Sciatic nerve (tissue), 2 donors: ENCODE measurements at regions of chr6 and their contacts with region 1.

Region 1: GRCh38 chr6:3052481-3053230 is 15.6 kb upstream of the RIPK1 start:
- DNase-seq: no peak
- ATAC-seq: no peak

Region 2: DNA sequence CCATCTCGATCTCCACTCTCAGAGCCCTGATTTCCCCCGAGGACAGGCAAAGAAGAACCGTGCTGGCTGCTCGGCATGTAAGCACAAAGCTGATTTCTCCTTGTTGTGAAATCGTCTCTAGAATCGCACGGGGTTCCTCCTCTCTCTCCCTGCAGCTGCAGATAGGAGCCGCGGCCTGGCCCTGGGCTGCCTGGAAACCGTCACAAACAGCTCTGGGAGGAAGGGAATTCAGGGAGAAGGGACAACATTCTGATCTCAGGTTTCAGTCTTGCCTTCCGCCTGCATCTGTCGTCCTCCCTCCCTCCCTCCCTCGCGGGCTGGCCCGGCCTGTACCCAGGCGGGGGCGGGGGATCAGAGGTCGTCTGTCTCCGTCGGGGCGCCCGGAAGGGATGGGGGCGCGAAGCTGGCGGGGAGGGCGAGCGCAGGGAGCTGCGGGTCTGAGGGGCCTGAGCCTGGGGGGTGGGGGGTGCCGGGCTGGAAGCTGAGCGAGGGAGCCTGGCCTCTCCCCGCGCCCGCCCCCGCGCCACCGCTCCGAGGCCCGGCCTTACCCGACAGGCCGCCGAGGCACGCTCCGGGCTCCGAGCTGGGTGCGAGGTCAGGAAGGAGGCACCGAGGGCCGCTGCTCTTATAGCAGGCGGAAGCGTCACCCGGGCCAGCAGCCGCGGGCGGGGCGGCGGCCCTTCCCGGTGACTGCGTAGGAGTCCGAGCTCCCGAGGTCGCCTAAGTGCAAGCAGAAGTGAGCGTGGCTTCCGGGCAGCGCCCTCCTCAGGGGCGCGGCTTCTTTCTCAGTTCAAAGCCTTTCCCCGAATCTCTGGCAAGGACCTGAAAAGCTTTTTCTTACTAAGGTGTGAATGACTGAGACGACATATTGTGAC is 211.2 kb before region 1 on chr6 and contains the start of gene SERPINB1:
- intact Hi-C with region 1: loop called (anchors 10 kb)
- DNase-seq: peak; percentile 91
- ATAC-seq: peak; percentile 88
- total RNA-seq, gene SERPINB1: 46.1 TPM

Region 3: DNA sequence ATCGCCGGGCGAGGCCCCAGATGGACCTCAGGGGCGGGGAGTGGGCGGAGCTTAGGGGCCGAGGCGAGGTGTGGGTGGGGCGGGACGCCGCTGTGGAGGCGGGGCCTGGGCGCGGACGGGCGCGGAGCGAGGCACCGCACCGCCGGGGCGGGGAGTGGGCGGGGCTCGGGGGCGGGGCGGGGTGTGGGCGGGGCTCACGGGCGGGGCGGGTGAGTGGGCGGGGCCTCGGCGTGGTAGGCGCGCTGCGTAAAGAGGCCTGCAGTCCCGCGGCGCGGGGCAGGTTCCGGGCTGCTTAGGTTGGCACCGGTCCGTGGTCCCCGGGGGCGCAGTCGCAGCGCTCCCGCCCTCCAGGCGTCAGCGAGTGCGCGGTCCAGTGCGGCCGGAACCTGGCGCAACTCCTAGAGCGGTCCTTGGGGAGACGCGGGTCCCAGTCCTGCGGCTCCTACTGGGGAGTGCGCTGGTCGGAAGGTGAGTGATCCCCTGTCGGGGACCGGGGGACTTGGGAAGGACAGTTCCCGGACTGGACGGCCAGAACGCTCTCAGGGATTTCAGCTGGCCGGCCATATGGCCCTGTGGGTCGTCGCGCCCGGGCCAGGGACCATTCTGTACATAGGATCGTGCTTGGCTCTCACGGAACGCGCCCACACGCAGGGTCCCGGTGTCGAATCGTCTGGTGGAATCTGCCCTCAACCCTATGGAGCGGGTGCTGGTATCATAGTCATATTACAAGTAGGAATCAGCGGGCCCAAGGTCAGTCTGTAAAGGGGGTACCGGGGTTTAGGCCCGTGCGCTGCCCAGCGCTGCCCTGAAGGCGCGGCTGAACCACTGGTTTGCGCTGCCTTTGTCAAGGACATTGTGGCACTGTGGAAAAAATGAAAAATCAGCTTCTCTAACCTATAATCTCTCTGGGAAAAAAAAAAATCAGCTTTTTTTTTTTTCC is 52.8 kb before region 1 on chr6 and contains the start of gene NQO2:
- intact Hi-C with region 1: loop called (anchors 1 kb)
- DNase-seq: peak; percentile 97
- ATAC-seq: peak; percentile 93
- total RNA-seq, gene NQO2: 30.1 TPM